ENCODE measurements at regions of chr10 and their contacts with region 1.

Region 1: DNA sequence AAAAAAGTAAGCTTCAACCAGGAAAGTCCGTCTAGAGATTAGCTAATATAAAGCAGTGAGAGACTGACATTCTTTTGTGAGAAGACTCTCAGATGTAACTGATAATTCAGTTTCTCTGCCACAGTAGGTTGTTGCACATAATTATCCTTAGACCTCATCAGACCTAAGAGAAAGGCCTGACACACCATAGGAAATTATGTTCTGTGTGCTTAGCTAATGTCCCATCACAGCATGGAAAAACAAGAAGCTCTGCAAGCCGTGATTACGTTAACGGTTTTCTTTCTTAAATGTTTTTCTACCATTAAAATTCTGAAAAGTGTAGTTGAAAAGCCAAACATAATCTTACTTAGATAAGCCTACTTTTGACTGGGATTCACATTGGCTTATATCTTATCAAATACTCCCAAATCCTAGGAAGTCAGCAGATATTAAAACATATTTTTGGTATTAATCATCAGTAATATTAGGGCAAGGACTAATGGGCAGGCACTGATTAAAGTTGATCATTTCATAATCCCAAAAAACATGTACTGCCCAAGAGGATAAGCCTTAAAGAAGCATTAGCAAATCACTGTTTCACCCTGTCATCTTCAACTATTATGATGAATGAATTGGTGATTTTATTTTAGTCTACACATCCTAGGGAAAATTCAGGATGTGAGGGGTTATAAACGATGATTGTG is 5.2 kb downstream of the CSTF2T start:
- DNase-seq: no peak
- ATAC-seq: no peak
- H3K4me3 ChIP-seq: no peak overlapping the region
- H3K4me3 Mint-ChIP-seq: no peak overlapping the region
- H3K27ac ChIP-seq: no peak overlapping the region
- H3K27ac Mint-ChIP-seq: peak overlapping the region; percentile 32
- H3K4me1 ChIP-seq: peaks cover 39% of the 10 kb centered on the region
- H3K4me1 Mint-ChIP-seq: peaks cover 53% of the 10 kb centered on the region
- H3K27me3 ChIP-seq: no peaks in the 10 kb centered on the region
- H3K27me3 Mint-ChIP-seq: no peaks in the 10 kb centered on the region
- CTCF ChIP-seq: no peak

Region 2: GRCh38 chr10:51707821-51708424 is 13.7 kb after region 1 on chr10:
- CTCF ChIA-PET with region 1: no interaction called
- POLR2A ChIA-PET with region 1: no interaction called
- intact Hi-C with region 1: loop called in 1 of 2 experiments (anchors 2 kb)
- DNase-seq: no peak
- ATAC-seq: no peak
- H3K4me3 ChIP-seq: no peak overlapping the region
- H3K4me3 Mint-ChIP-seq: no peak overlapping the region
- H3K27ac ChIP-seq: peak overlapping the region in 1 of 2 experiments; percentile 37
- H3K27ac Mint-ChIP-seq: peak overlapping the region; percentile 60
- H3K4me1 ChIP-seq: peaks cover 19% of the 10 kb centered on the region
- H3K4me1 Mint-ChIP-seq: peaks cover 19% of the 10 kb centered on the region
- H3K27me3 ChIP-seq: no peaks in the 10 kb centered on the region
- H3K27me3 Mint-ChIP-seq: peaks cover 3% of the 10 kb centered on the region
- CTCF ChIP-seq: no peak

Measured in CD8-positive, alpha-beta T cell (primary cell).